ENCODE measurements at regions of chr10 and their contacts with region 1.

Region 1: GRCh38 chr10:73879296-73880173 is 5.2 kb upstream of the CAMK2G start:
- DNase-seq: peak; percentile 92
- H3K4me3 ChIP-seq: no peak overlapping the region
- H3K27ac ChIP-seq: no peak overlapping the region
- H3K4me1 ChIP-seq: no peaks in the 10 kb centered on the region
- H3K27me3 ChIP-seq: no peaks in the 10 kb centered on the region
- CTCF ChIP-seq: peak; percentile 94

Region 2: DNA sequence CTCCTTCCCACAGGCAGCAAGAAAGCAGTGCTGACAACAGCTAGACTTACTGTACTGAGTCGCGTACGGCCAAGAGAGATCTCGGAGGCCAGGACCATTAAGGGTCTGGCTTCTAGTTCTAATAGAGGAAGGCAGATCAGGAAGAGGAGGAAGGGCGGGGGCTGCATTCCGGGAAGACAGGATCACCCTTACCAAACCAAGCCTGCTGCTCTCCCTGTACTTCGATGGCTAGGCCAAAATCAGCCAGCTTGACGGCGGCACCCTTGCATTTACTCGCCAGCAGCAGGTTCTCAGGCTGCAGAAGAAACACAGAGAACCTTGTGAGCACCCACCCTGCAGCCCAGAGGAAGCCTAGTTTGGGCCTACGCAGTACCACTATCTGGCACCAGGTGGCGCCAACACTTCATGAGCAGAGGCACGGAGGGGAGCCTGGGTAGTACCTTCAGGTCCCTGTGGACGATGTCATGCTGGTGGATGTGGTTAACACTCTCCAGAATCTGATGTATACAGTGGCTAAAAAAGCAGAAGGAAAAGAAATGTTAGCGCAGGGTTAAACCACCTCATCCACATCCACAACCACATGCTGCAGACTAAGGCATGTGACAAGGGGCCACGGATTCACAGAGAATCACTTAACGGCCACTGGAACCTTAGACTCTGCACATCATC is 30.6 kb before region 1 on chr10:
- intact Hi-C with region 1: loop called (anchors 1 kb)
- DNase-seq: peak; percentile 88
- H3K4me3 ChIP-seq: no peak overlapping the region
- H3K27ac ChIP-seq: no peak overlapping the region
- H3K4me1 ChIP-seq: no peaks in the 10 kb centered on the region
- H3K27me3 ChIP-seq: no peaks in the 10 kb centered on the region
- CTCF ChIP-seq: peak; percentile 100

Region 3: GRCh38 chr10:73940634-73941221 is 61.2 kb after region 1 on chr10:
- intact Hi-C with region 1: no loop called
- DNase-seq: peak; percentile 89
- H3K4me3 ChIP-seq: peak overlapping the region; percentile 6
- H3K27ac ChIP-seq: no peak overlapping the region
- H3K4me1 ChIP-seq: peaks cover 7% of the 10 kb centered on the region
- H3K27me3 ChIP-seq: no peaks in the 10 kb centered on the region
- CTCF ChIP-seq: peak; percentile 89

Region 4: GRCh38 chr10:74486659-74487058 is 607.1 kb after region 1 on chr10:
- intact Hi-C with region 1: no loop called
- DNase-seq: no peak
- H3K4me3 ChIP-seq: no peak overlapping the region
- H3K27ac ChIP-seq: no peak overlapping the region
- H3K4me1 ChIP-seq: no peaks in the 10 kb centered on the region
- H3K27me3 ChIP-seq: no peaks in the 10 kb centered on the region
- CTCF ChIP-seq: no peak

Measured in colonic mucosa (tissue), 4 donors.